GM10248 (cell line): ENCODE measurements at regions of chr1 and their contacts with region 1.

Region 1: GRCh38 chr1:169601093-169601881 is 15.0 kb upstream of the F5 start:
- DNase-seq: peak; percentile 28
- CTCF ChIP-seq: peak; percentile 54

Region 2: DNA sequence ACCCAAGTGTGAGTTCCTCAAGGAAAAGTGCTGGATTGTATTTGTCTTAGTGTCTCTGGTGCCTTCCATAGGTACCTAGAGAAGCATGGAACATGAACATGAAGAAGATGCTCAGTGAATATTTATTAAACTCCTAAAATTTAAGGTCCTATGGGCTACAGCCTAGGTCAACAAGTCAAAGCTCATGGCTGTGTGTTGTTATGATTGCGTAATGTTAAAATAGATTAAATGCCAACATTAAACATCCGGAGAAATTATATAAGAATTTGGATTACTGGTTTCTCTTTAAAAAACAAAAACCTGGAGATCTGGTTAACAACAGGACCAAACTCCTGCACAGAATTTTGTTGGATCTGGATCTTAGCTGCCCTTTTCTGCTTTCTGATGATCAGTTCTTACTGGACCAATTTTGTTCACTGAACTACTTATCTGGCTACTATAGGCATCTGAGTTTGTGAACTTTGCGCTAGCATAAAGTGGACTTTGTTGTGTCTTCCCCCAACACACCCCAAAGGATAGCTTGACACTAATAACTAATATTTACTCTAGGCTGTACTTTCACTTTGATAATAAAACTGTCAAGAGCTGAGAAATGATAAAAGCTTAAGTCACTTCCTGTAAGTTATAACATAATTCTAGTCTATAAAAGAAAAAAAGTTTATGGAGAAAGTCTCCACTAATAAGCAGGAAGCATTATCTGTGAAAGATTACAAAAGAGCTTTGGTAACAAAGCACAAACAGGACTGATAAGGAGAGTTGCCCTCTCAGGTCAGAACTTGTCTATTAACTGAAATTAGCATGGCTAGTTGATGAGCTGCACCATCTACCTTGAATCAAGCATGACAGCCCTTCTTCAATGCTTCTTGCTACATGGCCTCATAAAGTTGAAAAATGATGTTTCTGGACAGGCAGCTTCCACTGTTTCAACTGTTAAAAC is 35.7 kb before region 1 on chr1:
- CTCF ChIA-PET with region 1: no interaction called
- POLR2A ChIA-PET with region 1: no interaction called
- DNase-seq: no peak
- CTCF ChIP-seq: no peak

Region 3: DNA sequence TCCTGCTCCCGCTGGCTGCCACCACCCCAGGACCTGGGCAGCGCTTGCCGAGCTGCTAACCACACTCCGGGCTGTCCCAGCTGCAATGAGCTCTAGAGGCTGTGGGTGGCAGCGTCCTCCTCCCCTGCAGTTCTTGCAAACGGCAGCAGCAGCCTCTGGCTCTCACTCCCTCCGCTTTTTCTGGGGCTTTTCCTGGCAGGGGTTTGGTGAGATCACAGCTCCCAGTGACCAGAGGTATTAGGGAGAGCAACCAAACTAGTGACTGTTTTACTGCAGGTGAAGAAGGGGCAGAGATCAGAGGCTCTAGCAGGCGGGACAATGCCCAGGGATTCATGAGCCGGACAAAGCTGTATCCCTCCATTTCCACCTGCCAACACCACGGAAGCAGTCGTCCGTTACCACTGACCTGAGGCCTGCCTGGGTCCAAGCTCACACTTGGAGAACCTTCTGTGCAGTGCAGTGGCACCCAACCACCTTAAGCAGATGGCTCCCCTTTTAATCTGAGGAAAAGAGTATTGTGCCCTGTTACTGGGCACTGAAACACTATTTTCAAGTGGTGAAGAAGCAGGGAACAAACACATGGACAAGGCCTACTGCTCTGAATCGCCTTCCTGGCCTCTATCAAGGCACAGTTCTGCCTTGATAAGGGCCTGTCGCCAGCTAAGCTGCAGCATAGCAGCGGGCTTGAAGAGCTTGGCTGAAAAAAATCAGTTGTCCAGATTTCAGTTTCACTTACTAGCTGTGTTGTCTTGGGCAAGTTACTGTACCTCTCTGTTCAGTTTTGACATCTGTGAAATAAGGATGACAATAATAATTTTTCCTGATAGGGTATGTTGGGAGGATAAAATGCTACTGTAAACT is 14.7 kb before region 1 on chr1 and contains the start of gene F5:
- CTCF ChIA-PET with region 1: interaction called, 13 read pairs
- POLR2A ChIA-PET with region 1: no interaction called
- DNase-seq: peak; percentile 69
- CTCF ChIP-seq: peak; percentile 57

Region 4: GRCh38 chr1:169615803-169616202 is 14.5 kb after region 1 on chr1:
- CTCF ChIA-PET with region 1: interaction called, 25 read pairs
- POLR2A ChIA-PET with region 1: no interaction called
- DNase-seq: no peak
- CTCF ChIP-seq: no peak

Region 5: DNA sequence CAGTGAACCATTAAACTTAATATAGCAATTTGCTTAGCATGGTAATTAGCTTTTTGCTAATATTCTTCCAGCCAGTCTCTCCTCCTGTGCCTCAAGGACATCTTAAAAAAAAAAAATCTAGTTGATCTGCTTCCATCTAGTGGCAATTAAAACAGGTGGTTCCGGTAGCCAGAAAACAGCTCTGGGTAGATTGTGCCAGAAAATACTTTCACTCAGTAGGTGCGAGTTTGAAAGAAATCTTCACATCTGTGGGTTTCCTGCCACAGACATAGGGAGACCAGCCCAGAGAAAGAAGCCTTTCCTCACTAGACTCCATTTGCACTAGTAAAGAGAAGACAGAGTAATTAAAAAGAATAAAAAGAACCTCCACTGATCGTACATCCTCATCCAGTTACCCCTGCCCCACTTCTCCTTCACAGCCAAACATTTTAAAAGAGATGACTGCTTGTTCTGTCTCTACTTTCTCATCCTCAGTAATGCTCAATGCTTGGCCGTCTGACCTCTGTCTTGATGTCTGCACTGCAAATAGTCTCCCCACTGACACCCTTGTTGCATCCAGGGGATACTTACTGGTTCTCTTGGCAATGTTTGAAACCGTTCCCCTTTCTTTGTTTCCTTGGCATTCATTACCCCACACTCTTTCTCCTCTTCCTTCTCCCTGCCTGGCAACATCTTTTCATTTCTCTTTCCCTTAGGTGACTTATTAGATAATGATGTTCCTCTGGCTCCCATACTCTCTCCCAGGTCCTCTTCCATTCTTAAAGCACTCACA is 93.2 kb after region 1 on chr1:
- CTCF ChIA-PET with region 1: interaction called, 12 read pairs
- POLR2A ChIA-PET with region 1: no interaction called
- DNase-seq: no peak
- CTCF ChIP-seq: peak; percentile 18

Region 6: GRCh38 chr1:169809370-169810095 is 208.2 kb after region 1 on chr1:
- CTCF ChIA-PET with region 1: interaction called, 30 read pairs
- POLR2A ChIA-PET with region 1: no interaction called
- DNase-seq: peak; percentile 42
- CTCF ChIP-seq: peak; percentile 38